ENCODE measurements at regions of chr10 and their contacts with region 1.

Region 1: DNA sequence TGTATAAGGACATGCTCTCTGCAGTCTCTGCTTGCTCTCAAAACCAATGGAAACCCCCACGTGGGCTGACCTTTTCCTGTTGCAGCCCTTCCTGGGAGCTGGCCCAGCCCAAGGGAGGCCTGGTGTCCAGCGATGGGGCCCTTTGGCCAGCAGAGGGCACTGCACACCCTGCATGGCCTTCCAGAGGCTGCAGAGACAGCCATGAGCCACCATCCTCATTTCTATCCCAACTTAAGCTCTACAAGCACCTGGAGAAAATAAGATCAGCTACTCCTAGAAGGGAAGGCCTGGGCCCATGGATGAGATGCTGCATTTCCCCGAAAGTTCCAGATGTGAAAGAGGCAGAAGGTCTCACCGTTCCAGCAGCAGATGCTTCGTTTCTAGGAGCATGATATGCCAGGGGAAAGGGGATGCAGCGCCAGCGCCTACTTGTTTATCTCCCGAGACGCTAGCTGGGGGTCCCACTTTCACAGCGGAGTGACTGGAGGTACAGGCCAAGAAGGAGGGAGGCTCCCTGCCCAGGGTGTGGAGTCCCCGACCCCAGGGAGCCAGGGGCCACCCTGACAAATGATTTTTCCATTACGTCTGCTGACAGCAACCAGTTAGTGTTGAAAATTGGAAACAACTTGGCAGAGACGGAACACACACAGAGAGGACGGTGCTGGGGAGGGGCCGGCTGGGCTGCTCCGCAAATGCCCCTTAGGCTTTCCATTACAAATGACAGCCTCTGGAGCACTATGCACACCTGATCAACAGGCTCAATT is 106.4 kb downstream of the ZRANB1 start:
- DNase-seq: peak; percentile 85
- CTCF ChIP-seq: peak; percentile 96

Region 2: GRCh38 chr10:124928087-124928486 is 120.2 kb before region 1 on chr10:
- CTCF ChIA-PET with region 1: no interaction called
- POLR2A ChIA-PET with region 1: no interaction called
- DNase-seq: no peak
- CTCF ChIP-seq: no peak

Region 3: DNA sequence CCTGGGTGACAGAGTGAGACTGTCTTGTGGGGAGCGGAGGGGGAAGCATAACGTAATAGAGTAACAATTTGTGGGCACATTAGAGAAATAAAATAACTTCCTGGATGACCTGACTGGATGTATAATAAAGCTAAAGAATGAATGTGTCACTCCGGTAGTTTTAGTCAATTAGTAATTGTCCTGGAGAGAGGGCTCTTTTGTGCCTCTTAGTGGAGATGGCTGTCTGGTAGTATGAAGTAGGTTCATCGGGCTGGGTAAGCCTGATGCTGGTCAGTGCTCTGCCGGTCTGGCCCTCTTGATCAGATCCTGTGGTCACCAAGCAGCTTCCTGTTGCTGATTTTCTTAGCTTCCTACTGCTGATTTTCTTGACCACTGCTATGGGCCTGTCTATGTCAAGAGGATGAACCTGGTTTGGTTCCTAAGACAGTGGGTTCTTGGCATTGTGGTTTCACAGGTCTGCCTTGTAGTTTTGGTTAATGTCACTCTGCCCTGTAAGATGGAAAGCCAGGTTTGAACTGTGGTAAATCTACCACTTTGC is 72.2 kb before region 1 on chr10:
- CTCF ChIA-PET with region 1: no interaction called
- POLR2A ChIA-PET with region 1: no interaction called
- DNase-seq: no peak
- CTCF ChIP-seq: no peak

Region 4: DNA sequence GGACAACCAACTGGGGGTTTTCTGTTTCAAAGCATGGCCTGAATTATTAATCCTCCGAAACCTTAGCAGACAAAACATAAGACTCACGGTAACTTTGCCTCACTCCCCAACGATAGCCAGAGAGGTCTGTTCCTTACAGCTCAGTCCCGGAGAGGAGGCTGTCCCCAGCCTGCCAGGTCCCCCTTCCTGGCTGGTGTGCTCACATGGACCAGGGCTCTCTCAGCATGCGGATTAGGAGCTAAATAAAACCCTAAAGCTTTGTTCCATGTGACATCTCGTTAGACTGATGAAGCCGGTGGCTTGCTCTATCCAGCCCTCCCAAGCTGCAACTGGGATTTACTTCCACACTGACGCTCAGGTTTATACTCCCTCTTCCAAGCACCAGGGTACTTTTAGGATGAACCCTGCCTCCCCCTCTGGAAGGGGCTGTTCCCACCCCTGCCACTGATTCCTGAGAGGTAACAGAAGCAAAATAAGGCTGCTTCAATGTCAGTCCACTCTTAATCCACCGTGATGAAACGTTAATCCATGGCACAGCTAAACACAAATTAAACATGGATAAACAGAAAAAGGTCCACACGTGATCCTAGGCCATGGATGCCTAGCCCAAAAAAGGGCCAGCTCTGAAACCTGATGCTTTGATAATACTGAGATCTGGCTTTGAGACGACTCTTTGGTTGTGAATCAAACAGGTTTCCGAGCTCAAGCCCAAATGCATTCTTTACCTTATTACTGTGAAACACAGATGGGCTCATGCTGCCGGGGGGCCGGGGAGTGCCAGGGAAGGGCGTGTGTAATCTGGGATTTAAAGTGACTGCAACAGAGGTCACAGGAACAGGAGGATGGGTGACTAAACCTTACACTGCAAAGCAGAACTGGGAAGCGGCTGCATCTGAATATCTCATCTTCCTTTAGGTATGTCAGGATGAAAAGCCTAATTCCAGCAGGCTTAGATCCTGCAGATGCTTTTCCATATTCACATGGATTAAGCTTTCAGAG is 20.1 kb before region 1 on chr10:
- CTCF ChIA-PET with region 1: interaction called, 27 read pairs
- POLR2A ChIA-PET with region 1: no interaction called
- DNase-seq: no peak
- CTCF ChIP-seq: no peak

Region 5: DNA sequence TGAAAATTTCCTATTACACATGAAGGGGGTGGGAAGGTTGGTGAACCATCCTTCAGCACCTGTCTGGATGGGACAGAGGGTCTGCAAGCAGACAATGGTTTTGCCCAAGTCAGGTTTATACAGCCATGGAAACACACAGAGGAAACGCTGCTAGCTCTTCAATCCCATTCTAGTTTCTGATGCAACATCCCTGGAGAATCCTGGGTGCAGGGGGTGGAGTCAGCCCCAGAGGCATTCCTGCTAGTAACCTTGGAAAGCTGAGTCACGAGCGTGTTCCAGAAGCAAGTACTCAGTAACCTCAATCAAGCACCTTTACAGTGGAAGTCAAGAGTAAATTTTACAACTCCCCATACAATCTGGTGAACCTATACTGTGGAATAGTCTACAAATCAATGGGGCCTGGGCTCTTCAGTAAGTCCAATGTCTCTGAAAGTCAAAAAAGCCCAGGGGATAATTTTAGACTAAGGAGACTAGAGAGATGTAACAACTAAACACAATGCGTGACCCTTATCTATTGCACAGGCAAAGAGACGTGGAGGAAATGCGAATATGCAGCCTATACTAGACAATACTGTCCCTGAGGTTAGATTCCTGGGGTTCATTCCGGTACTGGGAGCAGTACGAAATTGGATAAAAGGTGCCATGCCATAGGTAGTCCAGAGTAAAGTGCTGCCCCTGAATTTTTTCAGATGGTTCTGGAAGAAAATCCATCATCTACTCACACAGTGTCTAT is 11.0 kb before region 1 on chr10:
- CTCF ChIA-PET with region 1: interaction called, 27 read pairs
- POLR2A ChIA-PET with region 1: no interaction called
- DNase-seq: no peak
- CTCF ChIP-seq: no peak

Region 6: GRCh38 chr10:125060826-125061556 is 12.7 kb after region 1 on chr10:
- CTCF ChIA-PET with region 1: interaction called, 43 read pairs
- POLR2A ChIA-PET with region 1: no interaction called
- DNase-seq: peak; percentile 49
- CTCF ChIP-seq: peak; percentile 50

Region 7: DNA sequence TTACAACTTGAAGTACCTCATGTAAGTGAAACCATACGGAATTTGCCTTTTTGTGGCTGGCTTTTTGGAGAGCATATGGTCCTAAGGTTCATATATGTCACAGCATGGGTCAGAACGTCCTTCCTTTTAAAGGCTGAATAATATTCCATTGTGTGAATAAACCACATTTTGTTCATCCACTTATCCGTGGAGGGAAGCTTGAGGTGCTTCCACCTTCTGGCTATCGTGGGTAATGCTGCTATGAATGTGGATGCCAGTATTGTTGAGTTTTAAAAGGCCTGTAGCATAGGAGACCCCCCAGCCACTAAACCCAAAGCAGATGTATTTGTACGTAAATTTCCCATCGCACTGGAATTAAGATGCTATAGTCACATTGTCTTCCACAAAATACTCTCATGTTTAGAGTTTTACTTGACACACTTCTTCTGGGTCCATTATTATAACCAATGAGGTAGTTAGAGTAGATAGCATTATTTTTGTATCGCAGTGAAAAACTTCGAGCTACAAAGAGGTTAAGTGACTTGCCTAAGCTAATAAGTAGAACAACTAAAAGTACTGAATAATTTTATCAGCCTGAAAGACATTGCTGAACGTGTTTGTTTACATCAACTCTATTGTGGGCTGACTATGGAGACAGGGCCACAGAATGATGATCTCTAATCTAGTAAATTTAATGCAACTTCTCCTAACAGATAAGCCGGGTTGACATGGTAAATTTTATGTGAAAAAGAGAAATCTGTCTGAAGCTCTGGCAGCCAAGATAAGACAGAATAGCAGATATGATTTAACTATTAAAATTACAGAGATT is 295.0 kb after region 1 on chr10:
- CTCF ChIA-PET with region 1: interaction called, 18 read pairs
- POLR2A ChIA-PET with region 1: no interaction called
- DNase-seq: no peak
- CTCF ChIP-seq: peak; percentile 50

Measured in GM10248 (cell line).